ENCODE measurements at regions of chr5 and their contacts with region 1.

Region 1: DNA sequence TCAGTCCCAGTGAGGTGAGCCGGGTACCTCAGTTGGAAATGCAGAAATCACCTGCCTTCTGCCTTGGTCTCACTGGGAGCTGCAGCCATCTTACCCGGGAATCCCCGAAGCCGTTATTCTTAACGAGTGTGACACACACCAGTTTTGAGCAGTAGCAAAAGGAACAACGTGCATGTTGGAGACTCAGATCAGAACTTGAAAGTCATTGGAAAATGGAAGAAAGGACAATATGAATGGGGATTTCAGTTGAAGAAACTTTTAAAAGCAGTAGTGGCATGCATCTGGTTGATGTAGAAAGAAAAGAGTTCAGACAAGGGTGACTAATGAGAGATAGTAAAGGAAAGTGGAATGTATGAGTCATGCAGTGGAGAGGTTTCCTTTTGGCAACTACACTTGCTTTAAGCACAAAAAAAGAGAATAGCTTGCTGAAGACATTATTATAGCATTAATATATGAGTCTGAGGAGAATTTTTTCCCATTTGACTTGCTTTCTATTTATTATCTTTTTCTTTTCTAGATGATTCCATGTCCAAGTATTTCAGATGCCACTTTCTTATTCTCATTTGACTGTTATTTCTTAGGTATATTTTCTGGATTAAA is 44.4 kb upstream of the ANKDD1B start:
- DNase-seq: peak; percentile 39
- H3K4me3 Mint-ChIP-seq: peak overlapping the region; percentile 29
- H3K27ac Mint-ChIP-seq: peak overlapping the region; percentile 81
- H3K4me1 Mint-ChIP-seq: peaks cover 53% of the 10 kb centered on the region
- H3K27me3 Mint-ChIP-seq: no peaks in the 10 kb centered on the region

Region 2: GRCh38 chr5:75351139-75351926 is 215.5 kb before region 1 on chr5:
- intact Hi-C with region 1: loop called (anchors 2 kb)
- DNase-seq: no peak
- H3K4me3 Mint-ChIP-seq: no peak overlapping the region
- H3K27ac Mint-ChIP-seq: peak overlapping the region; percentile 72
- H3K4me1 Mint-ChIP-seq: peaks cover 32% of the 10 kb centered on the region
- H3K27me3 Mint-ChIP-seq: no peaks in the 10 kb centered on the region

Region 3: DNA sequence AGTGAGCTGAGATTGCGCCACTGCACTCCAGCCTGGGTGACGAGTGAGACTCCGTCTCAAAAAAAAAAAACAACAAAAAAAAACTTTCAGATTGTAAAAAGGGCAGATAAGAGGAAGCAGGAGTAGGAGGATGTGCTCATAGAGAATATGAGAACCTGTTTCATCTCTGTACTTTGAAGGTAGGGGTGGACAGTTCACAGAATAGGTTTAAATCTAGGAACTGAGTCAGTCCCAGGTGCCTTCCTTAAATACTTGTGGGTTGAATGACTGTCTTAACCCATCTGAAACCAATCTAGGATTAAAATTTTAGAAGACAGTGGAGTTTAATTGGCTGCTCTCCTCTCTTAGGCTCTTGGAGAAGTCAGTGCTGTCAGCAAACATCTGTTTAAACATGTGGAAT is 42.7 kb before region 1 on chr5:
- intact Hi-C with region 1: loop called (anchors 1 kb)
- DNase-seq: no peak
- H3K4me3 Mint-ChIP-seq: peak overlapping the region; percentile 49
- H3K27ac Mint-ChIP-seq: peak overlapping the region; percentile 74
- H3K4me1 Mint-ChIP-seq: peaks cover 51% of the 10 kb centered on the region
- H3K27me3 Mint-ChIP-seq: no peaks in the 10 kb centered on the region

Region 4: DNA sequence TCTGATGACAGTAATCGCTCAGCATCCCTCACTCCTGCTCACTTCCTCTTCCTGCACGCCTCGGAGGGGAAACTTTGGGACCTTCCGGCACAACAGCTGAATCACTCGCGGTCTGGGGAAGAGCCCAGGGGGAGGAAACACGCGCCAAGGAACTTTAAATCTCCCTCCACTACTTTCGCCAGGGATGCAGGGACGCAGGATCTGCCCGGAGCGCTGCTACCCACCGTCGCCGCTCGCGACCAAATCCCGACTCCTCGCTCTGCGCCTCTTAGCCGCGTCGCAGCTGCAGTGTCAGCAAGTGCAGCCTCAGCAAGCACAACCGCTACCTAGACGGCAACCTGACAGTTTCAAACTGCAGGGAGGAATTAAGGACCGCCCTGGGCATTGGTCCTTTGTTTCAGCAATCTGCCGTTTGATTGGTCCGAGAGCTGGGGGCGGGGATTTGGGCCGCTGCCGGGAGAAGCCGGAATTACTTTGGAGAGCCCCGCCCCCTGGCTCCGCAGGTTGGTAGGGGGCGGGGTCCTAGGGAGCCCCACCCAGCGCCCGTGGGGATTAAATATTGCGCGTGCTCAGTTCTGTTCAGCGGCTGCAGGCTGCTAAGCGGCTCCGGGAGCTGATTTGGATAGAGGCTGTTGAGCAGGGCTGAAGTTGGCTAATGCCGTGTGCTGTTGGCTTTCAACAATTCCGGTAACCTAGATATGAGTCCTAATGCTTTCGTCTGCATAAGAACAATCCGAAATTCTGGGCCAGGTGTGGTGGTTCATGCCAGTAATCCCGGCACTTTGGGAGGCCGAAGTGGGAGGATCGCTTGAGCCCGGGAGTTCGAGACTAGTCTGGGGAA is 150.5 kb after region 1 on chr5 and contains the start of gene POC5:
- intact Hi-C with region 1: loop called (anchors 1 kb)
- DNase-seq: peak; percentile 98
- H3K4me3 Mint-ChIP-seq: peak within 1 kb of the TSS; percentile 98
- H3K27ac Mint-ChIP-seq: peak within 1 kb of the TSS; percentile 100
- H3K4me1 Mint-ChIP-seq: peaks cover 34% of the 10 kb centered on the region
- H3K27me3 Mint-ChIP-seq: peaks cover 3% of the 10 kb centered on the region
- total RNA-seq, gene POC5: 20.7 and 24.2 TPM in 2 replicates

Region 5: DNA sequence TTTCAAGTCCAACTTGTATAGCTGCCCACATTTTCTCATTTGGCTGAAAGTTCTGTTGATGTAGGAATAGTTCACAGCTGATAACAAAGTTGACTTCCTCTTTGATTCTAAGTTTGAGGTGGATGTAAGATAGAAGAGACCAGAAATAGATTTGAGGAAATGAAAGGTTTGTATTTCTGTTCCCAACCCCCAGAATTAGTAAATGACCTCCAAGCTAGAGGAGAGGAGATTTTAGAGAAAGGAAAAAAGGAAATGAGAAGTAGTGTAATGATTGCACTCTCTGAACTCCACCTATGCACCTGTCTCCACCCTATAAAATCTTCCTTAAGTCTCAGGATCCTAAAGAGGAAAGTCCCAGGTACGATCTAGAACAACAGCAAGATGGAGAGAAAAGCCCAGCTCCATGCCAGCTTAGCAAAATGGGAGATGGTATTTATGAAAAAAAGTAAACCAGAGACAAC is 280.8 kb after region 1 on chr5:
- intact Hi-C with region 1: no loop called
- DNase-seq: no peak
- H3K4me3 Mint-ChIP-seq: no peak overlapping the region
- H3K27ac Mint-ChIP-seq: no peak overlapping the region
- H3K4me1 Mint-ChIP-seq: no peaks in the 10 kb centered on the region
- H3K27me3 Mint-ChIP-seq: no peaks in the 10 kb centered on the region

Measured in activated T-helper 1 cell treated with anti-CD3 and anti-CD28 coated beads, Interleukin-12 subunit alpha, Interleukin-12 subunit beta, Interleukin-2, Interleukin-4 antibody, amounts not matched to agents 30 ng/mL and 10 ng/mL and 1 ng/mL, durations not matched to agents 14 hours and 24 hours and 36 hours (primary cell).